ENCODE measurements at regions of chr10 and their contacts with region 1.

Region 1: DNA sequence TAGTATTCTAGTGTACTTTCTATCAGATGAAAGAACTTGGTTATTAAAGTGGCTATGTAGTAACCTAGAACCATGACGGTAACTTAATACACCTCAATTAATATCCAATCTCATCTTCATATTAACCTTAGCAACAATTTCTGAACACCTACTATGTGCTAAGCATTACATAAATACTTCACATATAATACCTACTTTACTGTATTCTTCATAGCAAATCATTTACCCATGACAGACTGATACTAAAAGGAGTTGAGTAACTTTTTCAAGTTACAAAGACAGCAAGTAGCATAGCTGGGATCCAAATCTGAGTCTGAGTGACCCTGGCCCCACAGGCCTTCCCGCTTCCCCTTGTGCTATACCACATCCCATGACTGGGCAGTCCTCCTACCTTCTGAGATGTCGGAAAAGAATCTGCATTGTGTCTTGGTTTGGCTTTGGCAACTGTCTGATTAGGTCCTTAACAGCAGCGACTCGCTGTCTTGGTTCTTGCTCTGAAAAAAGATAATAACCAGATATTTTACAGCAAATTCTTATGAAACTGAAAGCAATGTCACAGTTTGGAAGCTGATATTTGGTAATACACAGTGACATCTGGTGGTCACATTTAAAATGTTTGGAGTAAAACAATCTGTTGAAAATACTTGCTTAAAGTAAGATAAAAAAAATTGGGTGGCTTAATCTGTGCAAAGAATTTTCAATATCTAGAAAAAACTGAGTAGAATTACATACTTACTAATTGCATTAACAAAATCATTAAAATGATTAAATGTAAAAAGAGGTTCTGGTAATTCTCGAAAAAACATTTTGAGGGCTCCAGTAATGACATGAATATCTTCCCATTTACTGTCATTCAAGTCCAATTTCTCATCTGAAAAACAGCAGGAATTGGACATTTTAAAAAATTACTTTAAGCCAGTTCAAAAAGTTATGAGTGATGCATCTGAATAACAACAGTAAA is 120.1 kb downstream of the ARHGAP12 start:
- DNase-seq: peak; percentile 80
- ATAC-seq: peak; percentile 74
- H3K4me3 ChIP-seq: peak overlapping the region; percentile 45
- H3K27ac ChIP-seq: peak overlapping the region; percentile 94
- H3K4me1 ChIP-seq: peaks cover 2% of the 10 kb centered on the region
- H3K27me3 ChIP-seq: no peaks in the 10 kb centered on the region
- CTCF ChIP-seq: peak; percentile 66
- POLR2A ChIP-seq: no peak
- RAD21 ChIP-seq: peak; percentile 85

Region 2: DNA sequence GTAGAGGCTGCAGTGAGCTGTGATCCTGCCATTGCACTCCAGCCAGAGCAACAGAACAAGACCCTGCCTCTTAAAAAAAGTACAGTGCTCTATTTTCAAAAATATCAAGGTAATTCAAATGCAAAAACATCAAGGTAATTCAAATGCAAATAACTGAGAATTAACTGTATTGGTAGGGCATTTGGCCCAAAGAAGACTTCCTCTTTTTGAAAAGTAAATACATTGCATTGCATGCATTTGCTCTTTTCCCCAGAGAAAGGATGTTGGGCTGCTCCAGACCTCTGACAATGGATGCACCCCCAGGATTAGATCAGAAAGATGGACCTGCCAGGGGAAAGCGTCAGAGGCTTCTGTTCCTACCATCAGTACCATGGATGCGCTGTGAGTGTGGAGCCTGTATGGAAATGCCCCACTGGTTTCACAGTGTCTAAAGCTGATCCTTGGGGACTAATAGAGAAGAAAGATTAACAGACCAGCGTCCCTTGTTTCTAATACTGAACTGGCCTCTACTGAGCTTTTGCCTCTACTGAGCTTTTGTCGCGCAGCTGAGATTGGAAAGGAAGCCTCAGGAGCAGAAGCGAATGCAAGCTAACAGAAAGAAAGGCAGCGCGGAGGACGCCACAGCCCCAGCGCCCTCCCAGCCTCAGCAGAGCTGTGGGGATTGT is 1085.5 kb before region 1 on chr10:
- CTCF ChIA-PET with region 1: no interaction called
- POLR2A ChIA-PET with region 1: no interaction called
- dilution Hi-C with region 1: no loop called
- in situ Hi-C with region 1: no loop called
- intact Hi-C with region 1: loop called (anchors 5 kb)
- DNase-seq: no peak
- ATAC-seq: no peak
- H3K4me3 ChIP-seq: no peak overlapping the region
- H3K27ac ChIP-seq: no peak overlapping the region
- H3K4me1 ChIP-seq: peaks cover 2% of the 10 kb centered on the region; the same call in 1 of the 2 replicates
- H3K27me3 ChIP-seq: peaks cover 5% of the 10 kb centered on the region
- CTCF ChIP-seq: no peak
- POLR2A ChIP-seq: no peak
- RAD21 ChIP-seq: no peak

Region 3: DNA sequence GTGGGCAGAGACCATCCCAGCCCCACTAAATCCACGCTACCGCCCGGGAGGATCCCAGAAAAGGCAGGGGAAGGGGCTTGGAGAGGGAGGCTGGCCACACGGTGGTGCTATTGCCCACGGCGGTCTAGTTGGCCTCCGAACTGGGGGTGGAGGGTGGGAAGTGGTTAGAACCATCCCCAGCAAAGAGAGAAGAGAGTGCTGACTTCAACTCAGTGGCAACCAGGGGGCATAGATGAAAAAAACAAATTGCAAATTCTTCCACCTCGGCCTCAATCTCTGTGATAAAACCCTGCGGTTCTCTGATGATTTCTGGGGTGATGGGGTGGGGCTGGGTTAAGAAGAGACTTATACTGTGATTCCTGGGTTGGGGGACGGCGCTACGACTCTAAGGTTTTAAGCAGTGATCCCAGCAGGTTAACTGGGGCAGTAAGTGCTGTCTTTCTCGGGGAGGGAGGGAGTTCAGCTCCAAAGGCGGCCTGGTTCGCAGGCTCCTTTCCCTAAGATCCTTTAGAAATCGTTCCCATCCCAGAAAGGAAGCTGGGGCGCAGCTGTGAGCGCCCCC is 1024.5 kb before region 1 on chr10:
- CTCF ChIA-PET with region 1: no interaction called
- POLR2A ChIA-PET with region 1: no interaction called
- dilution Hi-C with region 1: no loop called
- in situ Hi-C with region 1: no loop called
- intact Hi-C with region 1: loop called (anchors 1 kb)
- DNase-seq: peak; percentile 89
- ATAC-seq: peak; percentile 83
- H3K4me3 ChIP-seq: 0 out of 2 replicates have a peak overlapping the region, but pooled peaks have one; percentile 1
- H3K27ac ChIP-seq: peak overlapping the region; percentile 94
- H3K4me1 ChIP-seq: peaks cover 22% of the 10 kb centered on the region
- H3K27me3 ChIP-seq: no peaks in the 10 kb centered on the region
- CTCF ChIP-seq: peak; percentile 95
- POLR2A ChIP-seq: peak; percentile 55; the same call in 1 of the 2 replicates
- RAD21 ChIP-seq: peak; percentile 96

Region 4: DNA sequence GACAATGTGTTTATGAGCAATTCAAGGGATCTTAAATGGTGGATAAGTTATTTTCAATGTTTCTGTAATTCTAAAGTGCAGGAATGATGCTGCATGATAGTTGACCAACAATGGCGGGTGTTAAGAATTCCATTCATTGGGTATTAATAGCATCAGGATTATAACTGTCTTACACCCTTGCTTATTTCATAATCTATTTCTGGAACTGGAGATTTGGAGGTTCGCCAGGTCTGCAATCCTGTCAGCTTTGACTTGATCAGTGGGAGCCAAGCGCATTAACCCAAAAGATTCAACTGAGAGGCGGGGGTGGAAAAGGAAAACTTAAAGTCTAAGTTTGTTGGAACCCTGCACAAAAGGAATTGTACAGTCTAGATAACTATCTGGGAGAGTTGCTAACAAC is 604.4 kb before region 1 on chr10:
- CTCF ChIA-PET with region 1: no interaction called
- POLR2A ChIA-PET with region 1: interaction called, 12 read pairs
- dilution Hi-C with region 1: no loop called
- in situ Hi-C with region 1: no loop called
- intact Hi-C with region 1: no loop called
- DNase-seq: peak; percentile 40
- ATAC-seq: no peak
- H3K4me3 ChIP-seq: no peak overlapping the region
- H3K27ac ChIP-seq: no peak overlapping the region
- H3K4me1 ChIP-seq: 0 out of 2 replicates have a peak, but pooled peaks cover 2% of the 10 kb centered on the region
- H3K27me3 ChIP-seq: no peaks in the 10 kb centered on the region
- CTCF ChIP-seq: no peak
- POLR2A ChIP-seq: no peak
- RAD21 ChIP-seq: no peak

Region 5: DNA sequence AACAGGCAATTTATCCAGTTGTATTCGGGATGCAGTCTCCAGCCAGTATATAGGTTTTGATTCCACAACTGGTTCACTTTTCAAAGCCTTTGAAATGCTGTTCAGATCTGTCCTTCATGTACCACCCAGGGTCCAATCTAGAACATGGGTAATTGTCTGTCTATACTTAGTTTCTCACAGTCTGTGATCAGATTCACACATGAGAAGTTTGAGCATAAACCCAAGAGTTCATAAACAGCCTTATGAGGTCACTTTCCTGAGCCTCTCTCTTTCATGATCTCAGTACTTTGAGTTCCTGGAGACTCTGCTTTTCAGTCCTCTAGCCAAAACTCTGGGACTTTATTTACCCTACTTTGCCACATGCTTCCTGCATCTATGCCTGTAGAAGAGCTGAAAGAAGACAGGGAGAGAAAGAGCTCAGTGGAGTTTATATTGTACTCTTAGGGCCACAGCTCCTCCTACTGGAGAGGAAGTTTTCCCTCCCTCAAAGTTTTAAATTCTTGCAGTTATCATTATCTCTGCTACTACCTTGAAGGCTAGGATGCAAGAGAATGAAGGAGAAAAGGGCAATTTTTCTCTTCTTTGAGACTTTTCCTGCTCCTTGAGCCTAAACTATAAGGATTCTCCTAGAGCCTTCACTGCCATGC is 317.6 kb before region 1 on chr10:
- CTCF ChIA-PET with region 1: no interaction called
- POLR2A ChIA-PET with region 1: no interaction called
- dilution Hi-C with region 1: no loop called
- in situ Hi-C with region 1: no loop called
- intact Hi-C with region 1: loop called (anchors 5 kb)
- DNase-seq: peak; percentile 52
- ATAC-seq: peak; percentile 70
- H3K4me3 ChIP-seq: no peak overlapping the region
- H3K27ac ChIP-seq: no peak overlapping the region
- H3K4me1 ChIP-seq: peaks cover 5% of the 10 kb centered on the region
- H3K27me3 ChIP-seq: no peaks in the 10 kb centered on the region
- CTCF ChIP-seq: peak; percentile 62
- POLR2A ChIP-seq: no peak
- RAD21 ChIP-seq: peak; percentile 73

Region 6: DNA sequence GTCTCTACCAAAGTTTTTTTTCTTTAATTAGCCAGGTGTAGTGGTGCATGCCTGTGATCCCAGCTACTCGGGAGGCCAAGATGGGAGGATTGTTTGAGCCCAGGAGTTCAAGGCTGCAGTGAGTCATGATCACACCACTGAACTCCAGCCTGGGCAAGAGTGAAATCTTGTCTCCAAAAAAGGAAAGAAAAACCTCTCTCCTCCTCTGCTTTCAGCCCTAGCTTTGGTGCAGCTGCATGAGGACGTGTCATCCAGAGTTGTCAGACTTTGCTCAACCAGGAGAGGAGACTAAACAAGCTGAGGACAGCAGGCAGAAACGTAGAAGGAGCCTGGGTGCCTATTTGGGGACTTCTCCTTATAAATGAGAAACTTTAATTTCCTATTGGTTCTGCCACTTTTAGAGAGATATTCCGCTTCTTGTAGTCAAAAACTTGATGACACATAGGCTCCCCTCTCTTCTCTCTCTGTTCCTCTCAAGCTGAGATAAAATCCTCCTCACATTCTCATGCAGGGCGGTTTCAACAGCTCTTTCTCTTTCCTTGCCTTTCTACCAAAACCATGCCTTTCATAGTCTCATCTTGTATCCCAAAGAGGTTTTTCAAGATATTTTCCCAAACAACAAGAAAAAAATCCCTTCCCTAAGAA is 85.3 kb before region 1 on chr10:
- CTCF ChIA-PET with region 1: no interaction called
- POLR2A ChIA-PET with region 1: no interaction called
- dilution Hi-C with region 1: no loop called
- in situ Hi-C with region 1: no loop called
- intact Hi-C with region 1: no loop called
- DNase-seq: peak; percentile 52
- ATAC-seq: peak; percentile 69; the same call in 1 of the 2 replicates
- H3K4me3 ChIP-seq: no peak overlapping the region
- H3K27ac ChIP-seq: no peak overlapping the region
- H3K4me1 ChIP-seq: no peaks in the 10 kb centered on the region
- H3K27me3 ChIP-seq: no peaks in the 10 kb centered on the region
- CTCF ChIP-seq: no peak
- POLR2A ChIP-seq: no peak
- RAD21 ChIP-seq: no peak